ENCODE measurements at regions of chr2 and their contacts with region 1.

Region 1: GRCh38 chr2:84493514-84493913 is 22.8 kb upstream of the DNAH6 start:
- DNase-seq: peak; percentile 79
- H3K4me3 ChIP-seq: no peak overlapping the region
- H3K27ac ChIP-seq: peak overlapping the region; percentile 42
- H3K27me3 ChIP-seq: no peaks in the 10 kb centered on the region
- CTCF ChIP-seq: no peak

Region 2: GRCh38 chr2:84881581-84882414 is 388.3 kb after region 1 on chr2:
- CTCF ChIA-PET with region 1: interaction called, 13 read pairs
- POLR2A ChIA-PET with region 1: no interaction called
- DNase-seq: peak; percentile 66
- H3K4me3 ChIP-seq: peak overlapping the region; percentile 76
- H3K27ac ChIP-seq: peak overlapping the region; percentile 58
- H3K27me3 ChIP-seq: no peaks in the 10 kb centered on the region
- CTCF ChIP-seq: peak; percentile 84

Measured in AG04450 (cell line).